ENCODE measurements at regions of chr1 and their contacts with region 1.

Region 1: DNA sequence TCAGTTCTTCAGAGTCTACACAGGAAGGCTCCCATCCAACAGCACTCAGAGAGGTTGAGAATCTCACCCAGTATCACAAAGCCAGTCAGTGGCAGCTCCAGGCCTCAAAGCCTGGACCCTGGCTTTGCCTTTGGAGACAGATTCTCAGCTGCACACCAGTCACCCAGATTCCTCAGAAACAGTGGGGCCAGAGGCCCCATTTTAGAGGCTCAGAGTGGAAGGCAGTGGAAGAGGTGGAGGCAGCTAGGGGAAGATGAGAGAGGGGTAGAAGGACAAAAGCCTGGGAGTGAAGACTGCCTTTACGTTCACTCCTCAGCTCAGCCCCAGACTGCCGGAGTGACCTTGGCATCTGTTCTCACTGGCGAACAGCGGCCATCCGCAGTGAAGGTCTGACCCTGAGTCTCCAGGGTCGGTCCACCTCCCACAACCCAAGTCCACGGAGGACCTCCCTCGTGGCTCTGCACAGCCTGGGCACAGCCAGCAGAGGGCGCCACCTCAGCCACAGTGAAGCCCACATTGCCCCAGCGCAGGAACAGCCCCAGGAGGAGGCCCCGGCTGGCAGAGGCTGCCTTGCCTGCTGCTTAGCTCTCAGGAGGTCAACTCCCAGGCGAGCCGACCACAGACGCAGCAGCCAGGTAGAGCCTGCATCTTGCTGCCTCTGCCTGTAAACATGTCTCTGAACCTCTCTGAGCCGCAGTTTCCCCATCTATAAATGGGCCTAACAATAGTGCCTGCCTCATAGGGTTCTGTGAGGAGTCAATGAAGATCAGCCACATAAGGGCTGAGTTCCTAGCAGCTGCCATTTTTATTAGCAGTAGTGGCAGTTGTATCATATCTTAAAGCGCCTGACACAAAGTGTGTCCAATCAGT is 5.9 kb upstream of the FNDC5 start:
- DNase-seq: peak; percentile 70 to 79 (median 74)
- ATAC-seq: peak; percentile 75 to 85 (median 84)
- H3K4me3 ChIP-seq: no peak overlapping the region
- H3K27ac ChIP-seq: no peak overlapping the region
- H3K4me1 ChIP-seq: no peaks in the 10 kb centered on the region
- H3K27me3 ChIP-seq: no peaks in the 10 kb centered on the region
- CTCF ChIP-seq: peak; percentile 82 to 96 (median 91)
- POLR2A ChIP-seq: no peak

Region 2: GRCh38 chr1:32702599-32703478 is 173.7 kb before region 1 on chr1 and contains the start of gene SYNC:
- intact Hi-C with region 1: loop called in 1 of 2 experiments (anchors 10 kb)
- DNase-seq: peak in 1 of 3 donors; percentile 48
- ATAC-seq: peak; percentile 55 to 62 (median 56)
- H3K4me3 ChIP-seq: peak within 1 kb of the TSS; percentile 41 to 49 (median 46)
- H3K27ac ChIP-seq: no peak within 1 kb of the TSS
- H3K4me1 ChIP-seq: peaks cover 0 to 8% (median 2%) of the 10 kb centered on the region in 4 donors
- H3K27me3 ChIP-seq: no peaks in the 10 kb centered on the region
- CTCF ChIP-seq: no peak
- POLR2A ChIP-seq: no peak
- total RNA-seq, gene SYNC: 0.29 to 2.1 (median 0.44) TPM

Region 3: DNA sequence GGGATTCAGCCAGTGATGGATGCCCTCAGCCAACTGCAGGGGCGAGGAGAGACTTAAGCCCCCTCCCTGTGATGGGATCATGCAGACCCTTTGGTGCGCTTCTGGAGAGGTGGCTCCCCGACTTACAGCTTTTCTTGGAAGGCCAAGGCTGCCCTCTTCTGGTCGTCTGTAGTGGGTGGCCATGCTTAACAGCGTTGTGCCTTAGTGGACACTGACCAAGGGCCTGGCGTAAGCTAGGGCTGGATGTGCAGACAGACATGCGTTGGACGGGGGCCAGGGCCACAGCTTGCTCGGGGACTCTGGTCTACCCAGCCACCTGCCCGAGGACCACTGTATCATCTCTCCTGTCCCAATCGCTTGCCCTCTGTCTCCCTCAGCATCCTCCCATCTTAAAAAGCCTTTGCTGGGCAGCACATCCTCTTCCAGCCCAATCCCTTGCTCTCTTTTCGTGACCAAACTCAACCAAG is 209.8 kb after region 1 on chr1:
- intact Hi-C with region 1: loop called in 1 of 2 experiments (anchors 5 kb)
- DNase-seq: peak; percentile 76 to 82 (median 80)
- ATAC-seq: peak; percentile 85 to 88 (median 88)
- H3K4me3 ChIP-seq: no peak overlapping the region
- H3K27ac ChIP-seq: no peak overlapping the region
- H3K4me1 ChIP-seq: peaks cover 0 to 19% (median 5%) of the 10 kb centered on the region in 4 donors
- H3K27me3 ChIP-seq: no peaks in the 10 kb centered on the region
- CTCF ChIP-seq: peak; percentile 74 to 89 (median 76)
- POLR2A ChIP-seq: no peak